ENCODE measurements at regions of chr3 and their contacts with region 1.

Region 1: GRCh38 chr3:187738331-187739093 is 6.8 kb downstream of the BCL6 start:
- DNase-seq: peak; percentile 75 to 80
- H3K4me3 ChIP-seq: peak overlapping the region; percentile 0
- H3K4me3 Mint-ChIP-seq: peak overlapping the region; percentile 73
- H3K27ac Mint-ChIP-seq: no peak overlapping the region
- H3K4me1 ChIP-seq: peaks cover 13% of the 10 kb centered on the region; the same call in 1 of the 2 replicates
- H3K4me1 Mint-ChIP-seq: peaks cover 5% of the 10 kb centered on the region
- H3K27me3 ChIP-seq: no peaks in the 10 kb centered on the region
- H3K27me3 Mint-ChIP-seq: no peaks in the 10 kb centered on the region
- CTCF ChIP-seq: peak; percentile 55 to 63

Region 2: GRCh38 chr3:188052169-188053030 is 313.9 kb after region 1 on chr3:
- CTCF ChIA-PET with region 1: interaction called, 15 read pairs
- POLR2A ChIA-PET with region 1: interaction called, 3 read pairs
- intact Hi-C with region 1: no loop called
- DNase-seq: peak; percentile 76
- H3K4me3 ChIP-seq: no peak overlapping the region
- H3K4me3 Mint-ChIP-seq: peak overlapping the region; percentile 48
- H3K27ac Mint-ChIP-seq: peak overlapping the region; percentile 69
- H3K4me1 ChIP-seq: peaks cover 61% of the 10 kb centered on the region
- H3K4me1 Mint-ChIP-seq: peaks cover 25% of the 10 kb centered on the region
- H3K27me3 ChIP-seq: no peaks in the 10 kb centered on the region
- H3K27me3 Mint-ChIP-seq: no peaks in the 10 kb centered on the region
- CTCF ChIP-seq: peak in 1 of 2 experiments; percentile 20

Region 3: DNA sequence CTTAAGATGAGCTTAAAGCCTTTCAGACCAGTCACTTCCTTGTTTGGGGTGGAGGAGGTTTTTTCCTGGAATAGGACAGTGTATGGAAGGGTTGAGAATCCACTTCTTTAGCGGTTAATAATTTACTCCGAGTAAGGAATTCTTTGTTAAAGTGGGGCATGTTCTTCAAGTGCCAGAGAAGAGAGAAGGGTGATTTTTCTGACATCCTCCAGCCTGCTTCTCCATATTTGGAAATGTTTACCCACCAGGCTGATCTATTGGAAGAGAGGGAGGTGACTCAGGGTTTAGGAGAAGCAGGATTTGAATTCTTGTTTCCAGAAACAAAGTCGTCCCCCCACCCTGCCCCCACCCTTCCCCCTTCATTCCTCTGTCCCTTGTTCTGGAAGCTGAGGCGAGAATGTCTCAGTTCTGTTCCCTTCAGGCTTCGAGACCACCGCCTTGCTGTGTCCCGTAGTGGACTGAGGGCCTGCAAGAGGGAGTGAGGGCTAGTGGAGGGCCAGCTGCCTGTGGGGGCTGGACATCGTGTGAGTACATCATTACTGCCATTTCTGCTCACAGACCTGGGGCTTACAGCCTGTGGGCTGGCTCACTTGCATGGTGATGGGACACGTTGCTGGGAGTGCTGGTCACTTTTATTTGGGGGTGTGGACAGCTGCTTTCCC is 473.9 kb after region 1 on chr3:
- CTCF ChIA-PET with region 1: interaction called, 4 read pairs
- POLR2A ChIA-PET with region 1: no interaction called
- intact Hi-C with region 1: loop called (anchors 1 kb)
- DNase-seq: peak; percentile 55 to 60
- H3K4me3 ChIP-seq: no peak overlapping the region
- H3K4me3 Mint-ChIP-seq: peak overlapping the region; percentile 44
- H3K27ac Mint-ChIP-seq: peak overlapping the region; percentile 79
- H3K4me1 ChIP-seq: peaks cover 60% of the 10 kb centered on the region
- H3K4me1 Mint-ChIP-seq: peaks cover 35% of the 10 kb centered on the region
- H3K27me3 ChIP-seq: no peaks in the 10 kb centered on the region
- H3K27me3 Mint-ChIP-seq: no peaks in the 10 kb centered on the region
- CTCF ChIP-seq: no peak

Region 4: DNA sequence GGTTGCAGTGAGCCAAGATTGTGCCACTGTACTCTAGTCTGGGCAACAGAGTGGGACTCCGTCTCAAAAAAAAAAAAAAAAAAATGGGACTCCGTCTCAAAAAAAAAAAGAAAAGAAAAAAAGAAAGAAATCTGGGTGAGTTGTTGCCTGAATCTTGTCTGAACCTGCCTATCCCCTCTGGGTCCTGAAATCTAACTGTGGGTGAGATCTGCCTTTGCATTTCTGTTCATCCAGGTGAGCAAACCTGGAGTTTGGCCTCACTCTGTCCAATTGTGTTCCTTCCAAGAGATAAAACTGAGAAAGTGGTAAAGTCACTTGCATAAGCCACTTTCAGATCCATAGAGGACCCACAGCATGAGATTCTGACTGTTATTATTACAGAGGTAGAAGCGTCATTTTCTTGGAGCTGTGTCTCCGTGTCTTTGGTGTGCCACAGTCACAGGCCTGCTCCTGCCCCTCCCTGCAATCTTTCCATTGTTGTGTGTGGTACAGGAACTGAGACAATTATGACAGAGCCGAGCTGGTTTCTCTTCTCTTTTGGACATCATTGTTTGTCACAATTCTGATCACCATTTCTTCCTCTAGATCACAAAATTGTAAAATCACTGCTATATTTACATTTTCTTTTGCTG is 651.3 kb after region 1 on chr3:
- CTCF ChIA-PET with region 1: no interaction called
- POLR2A ChIA-PET with region 1: no interaction called
- intact Hi-C with region 1: loop called (anchors 5 kb)
- DNase-seq: no peak
- H3K4me3 ChIP-seq: no peak overlapping the region
- H3K4me3 Mint-ChIP-seq: no peak overlapping the region
- H3K27ac Mint-ChIP-seq: peak overlapping the region; percentile 73
- H3K4me1 ChIP-seq: peaks cover 39% of the 10 kb centered on the region
- H3K4me1 Mint-ChIP-seq: peaks cover 32% of the 10 kb centered on the region
- H3K27me3 ChIP-seq: no peaks in the 10 kb centered on the region
- H3K27me3 Mint-ChIP-seq: no peaks in the 10 kb centered on the region
- CTCF ChIP-seq: no peak

Region 5: GRCh38 chr3:189041482-189042090 is 1303.1 kb after region 1 on chr3:
- CTCF ChIA-PET with region 1: no interaction called
- POLR2A ChIA-PET with region 1: no interaction called
- intact Hi-C with region 1: loop called (anchors 5 kb)
- DNase-seq: peak; percentile 41 to 55
- H3K4me3 ChIP-seq: no peak overlapping the region
- H3K4me3 Mint-ChIP-seq: no peak overlapping the region
- H3K27ac Mint-ChIP-seq: no peak overlapping the region
- H3K4me1 ChIP-seq: no peaks in the 10 kb centered on the region
- H3K4me1 Mint-ChIP-seq: no peaks in the 10 kb centered on the region
- H3K27me3 ChIP-seq: no peaks in the 10 kb centered on the region
- H3K27me3 Mint-ChIP-seq: no peaks in the 10 kb centered on the region
- CTCF ChIP-seq: peak in 1 of 2 experiments; percentile 30

Region 6: GRCh38 chr3:189233225-189233858 is 1494.8 kb after region 1 on chr3:
- CTCF ChIA-PET with region 1: interaction called, 4 read pairs
- POLR2A ChIA-PET with region 1: no interaction called
- intact Hi-C with region 1: loop called (anchors 5 kb)
- DNase-seq: peak; percentile 68 to 70
- H3K4me3 ChIP-seq: no peak overlapping the region
- H3K4me3 Mint-ChIP-seq: no peak overlapping the region
- H3K27ac Mint-ChIP-seq: no peak overlapping the region
- H3K4me1 ChIP-seq: peaks cover 8% of the 10 kb centered on the region; the same call in 1 of the 2 replicates
- H3K4me1 Mint-ChIP-seq: peaks cover 14% of the 10 kb centered on the region
- H3K27me3 ChIP-seq: no peaks in the 10 kb centered on the region
- H3K27me3 Mint-ChIP-seq: no peaks in the 10 kb centered on the region
- CTCF ChIP-seq: peak; percentile 79 to 81